GM18951 (cell line): ENCODE measurements at regions of chr6 and their contacts with region 1.

Region 1: DNA sequence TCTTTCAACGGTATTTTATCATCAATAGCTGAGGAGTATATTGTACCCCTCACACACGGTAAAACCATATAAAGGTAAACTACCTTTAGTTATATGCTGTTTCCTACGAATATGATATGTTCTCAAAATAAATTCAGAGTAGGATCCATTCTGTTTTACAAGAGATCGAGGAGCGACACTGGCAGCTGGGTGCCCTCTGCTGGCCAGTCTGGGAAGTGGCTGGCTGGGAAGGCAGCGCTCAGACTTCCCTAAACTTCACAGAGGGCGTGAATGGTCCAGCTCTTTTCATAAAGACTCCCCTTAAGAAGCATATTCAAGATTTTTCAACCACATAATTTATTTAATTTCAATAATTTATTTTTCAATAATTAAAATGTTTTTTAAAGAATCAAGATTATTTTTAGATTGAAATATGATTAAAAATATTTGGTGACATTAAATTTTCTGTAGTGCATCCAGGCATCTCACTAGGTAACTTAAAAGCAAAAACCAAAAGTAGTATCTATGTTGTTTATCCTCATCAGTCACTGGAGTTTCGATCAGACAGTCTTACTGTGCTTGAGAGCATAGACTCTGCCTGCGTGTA is 187.5 kb upstream of the PDE10A start:
- POLR2A ChIP-seq: no peak

Region 2: GRCh38 chr6:165439928-165440554 is 410.5 kb before region 1 on chr6:
- in situ Hi-C with region 1: loop called (anchors 10 kb)
- POLR2A ChIP-seq: no peak

Region 3: DNA sequence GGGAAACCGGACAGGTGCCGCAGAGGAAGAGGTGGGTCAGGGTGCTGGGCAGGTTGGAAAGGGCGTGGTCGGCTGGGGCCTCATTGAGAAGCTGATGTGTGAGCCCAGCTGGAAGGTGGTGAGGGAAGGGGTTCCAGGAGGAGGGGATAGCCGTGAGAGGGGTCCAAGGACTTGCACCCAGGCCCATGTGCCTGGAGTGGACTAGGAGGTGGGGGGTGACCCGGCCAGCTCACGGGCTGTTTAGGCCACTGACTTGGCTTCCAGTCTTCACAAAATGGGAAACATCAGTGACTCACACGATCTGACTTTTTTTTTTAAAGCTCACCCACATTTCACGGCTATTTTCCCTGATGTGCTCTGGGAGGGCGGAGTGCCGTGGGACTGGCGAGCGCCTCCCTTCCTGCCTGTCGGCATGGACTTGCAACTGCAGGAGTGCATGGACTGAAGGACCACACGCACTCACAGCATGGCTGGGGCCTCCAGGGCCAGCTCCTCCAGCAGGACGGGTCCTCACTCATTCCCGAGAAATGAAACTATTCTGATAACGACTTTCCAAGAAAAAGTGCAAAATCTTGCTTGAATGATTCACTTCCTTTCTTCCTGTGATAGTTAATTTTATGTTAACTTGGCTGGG is 174.0 kb before region 1 on chr6:
- in situ Hi-C with region 1: no loop called
- POLR2A ChIP-seq: no peak